Left ventricle myocardium inferior (tissue), 1 donor: ENCODE measurements at regions of chr11 and their contacts with region 1.

Region 1: GRCh38 chr11:126318574-126319373 is 14.9 kb downstream of the DCPS start:
- DNase-seq: peak; percentile 44
- H3K4me3 ChIP-seq: peak overlapping the region; percentile 44
- H3K27ac ChIP-seq: peak overlapping the region; percentile 90
- H3K4me1 ChIP-seq: peaks cover 37% of the 10 kb centered on the region
- H3K27me3 ChIP-seq: no peaks in the 10 kb centered on the region
- CTCF ChIP-seq: no peak

Region 2: GRCh38 chr11:125987066-125987641 is 331.6 kb before region 1 on chr11:
- intact Hi-C with region 1: no loop called
- DNase-seq: no peak
- H3K4me3 ChIP-seq: no peak overlapping the region
- H3K27ac ChIP-seq: no peak overlapping the region
- H3K4me1 ChIP-seq: peaks cover 11% of the 10 kb centered on the region
- H3K27me3 ChIP-seq: no peaks in the 10 kb centered on the region
- CTCF ChIP-seq: no peak

Region 3: GRCh38 chr11:126355324-126355925 is 36.7 kb after region 1 on chr11 and contains the start of gene ST3GAL4:
- intact Hi-C with region 1: loop called (anchors 5 kb)
- DNase-seq: peak; percentile 90
- H3K4me3 ChIP-seq: peak within 1 kb of the TSS; percentile 75
- H3K27ac ChIP-seq: peak within 1 kb of the TSS; percentile 84
- H3K4me1 ChIP-seq: peaks cover 94% of the 10 kb centered on the region
- H3K27me3 ChIP-seq: no peaks in the 10 kb centered on the region
- CTCF ChIP-seq: no peak
- total RNA-seq, gene ST3GAL4: 61.7 TPM